Breast epithelium (tissue), 4 donors: ENCODE measurements at regions of chr1 and their contacts with region 1.

Region 1: GRCh38 chr1:220487297-220487820 is 40.6 kb upstream of the MARK1 start:
- DNase-seq: no peak
- H3K4me3 ChIP-seq: no peak overlapping the region
- H3K27ac ChIP-seq: no peak overlapping the region
- H3K4me1 ChIP-seq: no peaks in the 10 kb centered on the region
- H3K27me3 ChIP-seq: no peaks in the 10 kb centered on the region
- CTCF ChIP-seq: no peak
- POLR2A ChIP-seq: no peak

Region 2: GRCh38 chr1:219724440-219724839 is 762.9 kb before region 1 on chr1:
- intact Hi-C with region 1: no loop called
- DNase-seq: no peak
- H3K4me3 ChIP-seq: no peak overlapping the region
- H3K27ac ChIP-seq: no peak overlapping the region
- H3K4me1 ChIP-seq: no peaks in the 10 kb centered on the region
- H3K27me3 ChIP-seq: no peaks in the 10 kb centered on the region
- CTCF ChIP-seq: no peak
- POLR2A ChIP-seq: no peak

Region 3: DNA sequence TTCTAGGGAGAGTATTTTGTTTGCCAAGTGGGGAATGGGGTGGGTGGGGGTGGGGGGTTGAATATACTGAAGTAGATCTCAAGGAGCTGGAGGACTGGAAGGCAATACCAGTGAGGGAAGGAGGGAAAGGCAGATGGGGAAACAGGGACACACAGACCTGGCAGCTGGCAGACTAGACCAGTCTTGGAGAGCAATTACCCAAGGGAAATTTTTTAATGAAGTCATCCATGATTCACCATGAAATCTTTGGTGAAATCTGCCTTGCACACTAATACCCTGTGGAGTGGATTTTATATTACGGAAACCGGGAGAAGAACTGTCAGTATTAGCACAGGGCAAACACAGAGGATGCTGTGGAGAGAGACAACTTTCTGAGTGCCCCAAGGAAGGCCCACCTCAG is 10.8 kb after region 1 on chr1:
- intact Hi-C with region 1: loop called (anchors 2 kb)
- DNase-seq: no peak
- H3K4me3 ChIP-seq: no peak overlapping the region
- H3K27ac ChIP-seq: no peak overlapping the region
- H3K4me1 ChIP-seq: no peaks in the 10 kb centered on the region
- H3K27me3 ChIP-seq: no peaks in the 10 kb centered on the region
- CTCF ChIP-seq: no peak
- POLR2A ChIP-seq: no peak

Region 4: GRCh38 chr1:221035680-221036153 is 548.4 kb after region 1 on chr1:
- intact Hi-C with region 1: no loop called
- DNase-seq: no peak
- H3K4me3 ChIP-seq: no peak overlapping the region
- H3K27ac ChIP-seq: peak overlapping the region in 1 of 2 donors; percentile 34
- H3K4me1 ChIP-seq: no peaks in the 10 kb centered on the region
- H3K27me3 ChIP-seq: no peaks in the 10 kb centered on the region
- CTCF ChIP-seq: no peak
- POLR2A ChIP-seq: no peak